CD4-positive, alpha-beta T cell (primary cell): ENCODE measurements at regions of chr16 and their contacts with region 1.

Region 1: DNA sequence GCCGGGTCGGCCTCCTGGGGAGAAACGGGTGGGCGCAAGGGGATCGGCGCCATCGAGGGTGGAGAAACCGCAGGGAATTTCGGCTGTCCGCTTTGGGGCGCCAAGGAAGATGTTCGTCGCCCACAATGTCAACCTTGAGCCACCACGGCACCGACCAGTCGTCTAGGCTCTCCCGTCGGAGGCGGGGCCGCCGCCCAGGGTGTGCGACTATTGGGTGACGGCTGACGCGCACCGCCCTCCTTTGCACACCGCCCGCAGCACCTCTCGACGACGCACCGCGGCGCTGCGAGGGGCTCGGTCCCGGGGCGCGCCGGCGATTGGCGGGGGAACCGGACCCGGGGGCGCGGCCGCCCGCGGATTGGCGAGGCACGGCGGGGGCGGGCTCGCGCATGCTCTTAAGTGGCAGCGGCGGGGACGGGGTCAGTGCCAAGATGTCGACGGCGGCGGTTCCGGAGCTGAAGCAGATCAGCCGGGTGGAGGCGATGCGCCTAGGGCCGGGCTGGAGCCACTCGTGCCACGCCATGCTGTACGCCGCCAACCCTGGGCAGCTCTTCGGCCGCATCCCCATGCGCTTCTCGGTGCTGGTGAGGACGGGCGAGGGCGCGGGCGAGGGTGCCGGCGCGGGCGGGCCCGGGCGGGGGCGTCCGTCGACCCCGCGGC is at the start of gene NUDT16L1:
- DNase-seq: peak in 13 of 14 experiments; percentile 93 to 99 (median 97)
- ATAC-seq: peak; percentile 90
- H3K4me3 ChIP-seq: peak within 1 kb of the TSS; percentile 93
- H3K4me3 Mint-ChIP-seq: peak within 1 kb of the TSS; percentile 91
- H3K27ac ChIP-seq: peak within 1 kb of the TSS; percentile 63 to 81
- H3K27ac Mint-ChIP-seq: peak within 1 kb of the TSS; percentile 89
- H3K4me1 ChIP-seq: peaks cover 25% of the 10 kb centered on the region
- H3K4me1 Mint-ChIP-seq: peaks cover 7% of the 10 kb centered on the region
- H3K27me3 ChIP-seq: no peaks in the 10 kb centered on the region
- H3K27me3 Mint-ChIP-seq: no peaks in the 10 kb centered on the region
- CTCF ChIP-seq: no peak
- total RNA-seq, gene NUDT16L1: 75.2 to 78.9 TPM

Region 2: GRCh38 chr16:4475880-4476788 is 217.3 kb before region 1 on chr16 and contains the start of gene HMOX2:
- CTCF ChIA-PET with region 1: no interaction called
- POLR2A ChIA-PET with region 1: interaction called, 3 read pairs
- intact Hi-C with region 1: loop called in 1 of 2 experiments (anchors 5 kb)
- DNase-seq: peak; percentile 86 to 97 (median 92)
- ATAC-seq: peak; percentile 85
- H3K4me3 ChIP-seq: peak within 1 kb of the TSS; percentile 98
- H3K4me3 Mint-ChIP-seq: peak within 1 kb of the TSS; percentile 92
- H3K27ac ChIP-seq: peak within 1 kb of the TSS; percentile 67 to 80
- H3K27ac Mint-ChIP-seq: peak within 1 kb of the TSS; percentile 78
- H3K4me1 ChIP-seq: peaks cover 68% of the 10 kb centered on the region
- H3K4me1 Mint-ChIP-seq: peaks cover 47% of the 10 kb centered on the region
- H3K27me3 ChIP-seq: no peaks in the 10 kb centered on the region
- H3K27me3 Mint-ChIP-seq: no peaks in the 10 kb centered on the region
- CTCF ChIP-seq: peak; percentile 40
- total RNA-seq, gene HMOX2: 63.4 to 66.4 TPM

Region 3: DNA sequence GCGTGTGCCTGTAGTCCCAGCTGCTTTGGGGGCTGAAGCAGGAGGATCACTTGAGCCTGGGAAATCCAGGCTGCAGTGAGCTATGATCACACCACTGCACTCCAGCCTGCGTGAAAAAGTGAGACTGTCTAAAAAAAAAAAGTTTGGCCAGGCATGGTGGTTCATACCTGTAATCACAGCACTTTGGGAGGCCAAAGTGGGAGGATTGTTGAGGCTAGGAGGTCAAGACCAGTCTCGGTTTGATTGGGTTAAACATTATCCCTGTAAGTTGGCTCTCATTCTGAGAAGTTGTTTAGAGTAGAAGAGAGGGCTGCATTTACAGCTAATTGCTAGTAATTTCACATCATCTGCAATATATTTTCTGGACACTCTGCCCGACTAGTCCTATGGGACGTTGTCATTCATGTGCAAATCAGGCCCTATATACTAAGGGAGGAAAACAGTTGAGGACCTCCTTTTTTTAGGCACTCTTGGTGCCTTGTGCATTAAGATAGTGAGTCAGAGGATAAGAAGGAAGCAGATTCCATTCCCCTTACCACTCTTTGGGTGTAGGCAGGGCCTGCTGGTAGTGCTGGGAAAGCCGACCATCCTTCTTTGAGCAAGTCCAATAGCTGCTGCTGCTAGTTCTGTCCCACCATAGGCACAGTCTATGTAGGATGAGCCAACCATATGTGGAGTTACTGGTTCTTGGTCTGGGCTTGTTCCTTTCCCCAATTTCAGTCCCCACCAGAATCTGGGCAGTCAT is 198.5 kb before region 1 on chr16:
- CTCF ChIA-PET with region 1: no interaction called
- POLR2A ChIA-PET with region 1: no interaction called
- intact Hi-C with region 1: no loop called
- DNase-seq: no peak
- ATAC-seq: no peak
- H3K4me3 ChIP-seq: no peak overlapping the region
- H3K4me3 Mint-ChIP-seq: no peak overlapping the region
- H3K27ac ChIP-seq: no peak overlapping the region
- H3K27ac Mint-ChIP-seq: peak overlapping the region; percentile 87
- H3K4me1 ChIP-seq: peaks cover 82% of the 10 kb centered on the region
- H3K4me1 Mint-ChIP-seq: peaks cover 88% of the 10 kb centered on the region
- H3K27me3 ChIP-seq: no peaks in the 10 kb centered on the region
- H3K27me3 Mint-ChIP-seq: no peaks in the 10 kb centered on the region
- CTCF ChIP-seq: no peak

Region 4: GRCh38 chr16:4517812-4518680 is 175.4 kb before region 1 on chr16:
- CTCF ChIA-PET with region 1: no interaction called
- POLR2A ChIA-PET with region 1: no interaction called
- intact Hi-C with region 1: no loop called
- DNase-seq: peak in 2 of 14 experiments; percentile 29 to 37
- ATAC-seq: peak; percentile 16
- H3K4me3 ChIP-seq: no peak overlapping the region
- H3K4me3 Mint-ChIP-seq: no peak overlapping the region
- H3K27ac ChIP-seq: no peak overlapping the region
- H3K27ac Mint-ChIP-seq: peak overlapping the region; percentile 80
- H3K4me1 ChIP-seq: peaks cover 50% of the 10 kb centered on the region
- H3K4me1 Mint-ChIP-seq: peaks cover 45% of the 10 kb centered on the region
- H3K27me3 ChIP-seq: no peaks in the 10 kb centered on the region
- H3K27me3 Mint-ChIP-seq: no peaks in the 10 kb centered on the region
- CTCF ChIP-seq: peak; percentile 52

Region 5: DNA sequence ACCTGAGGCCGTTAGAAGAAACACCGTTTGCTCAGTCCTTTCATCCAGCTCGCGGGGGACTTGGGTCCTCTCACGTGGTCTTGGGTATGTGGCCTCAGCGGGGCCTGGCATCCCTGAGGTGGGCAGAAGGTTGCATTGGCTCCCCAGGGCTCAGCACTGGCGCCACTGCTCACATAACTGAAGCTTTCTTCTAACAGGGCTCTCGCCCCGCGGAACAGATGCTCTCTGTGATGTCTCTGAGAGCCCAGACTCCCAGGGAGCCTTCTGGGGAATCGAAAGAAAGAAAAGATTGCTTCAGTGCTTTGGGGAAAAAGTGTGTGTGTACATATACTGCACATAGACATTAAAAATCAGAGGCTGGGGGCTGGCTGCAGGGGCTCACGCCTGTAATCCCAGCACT is 58.7 kb before region 1 on chr16:
- CTCF ChIA-PET with region 1: no interaction called
- POLR2A ChIA-PET with region 1: no interaction called
- intact Hi-C with region 1: no loop called
- DNase-seq: no peak
- ATAC-seq: no peak
- H3K4me3 ChIP-seq: no peak overlapping the region
- H3K4me3 Mint-ChIP-seq: no peak overlapping the region
- H3K27ac ChIP-seq: no peak overlapping the region
- H3K27ac Mint-ChIP-seq: no peak overlapping the region
- H3K4me1 ChIP-seq: peaks cover 2% of the 10 kb centered on the region
- H3K4me1 Mint-ChIP-seq: peaks cover 17% of the 10 kb centered on the region
- H3K27me3 ChIP-seq: no peaks in the 10 kb centered on the region
- H3K27me3 Mint-ChIP-seq: no peaks in the 10 kb centered on the region
- CTCF ChIP-seq: no peak

Region 6: DNA sequence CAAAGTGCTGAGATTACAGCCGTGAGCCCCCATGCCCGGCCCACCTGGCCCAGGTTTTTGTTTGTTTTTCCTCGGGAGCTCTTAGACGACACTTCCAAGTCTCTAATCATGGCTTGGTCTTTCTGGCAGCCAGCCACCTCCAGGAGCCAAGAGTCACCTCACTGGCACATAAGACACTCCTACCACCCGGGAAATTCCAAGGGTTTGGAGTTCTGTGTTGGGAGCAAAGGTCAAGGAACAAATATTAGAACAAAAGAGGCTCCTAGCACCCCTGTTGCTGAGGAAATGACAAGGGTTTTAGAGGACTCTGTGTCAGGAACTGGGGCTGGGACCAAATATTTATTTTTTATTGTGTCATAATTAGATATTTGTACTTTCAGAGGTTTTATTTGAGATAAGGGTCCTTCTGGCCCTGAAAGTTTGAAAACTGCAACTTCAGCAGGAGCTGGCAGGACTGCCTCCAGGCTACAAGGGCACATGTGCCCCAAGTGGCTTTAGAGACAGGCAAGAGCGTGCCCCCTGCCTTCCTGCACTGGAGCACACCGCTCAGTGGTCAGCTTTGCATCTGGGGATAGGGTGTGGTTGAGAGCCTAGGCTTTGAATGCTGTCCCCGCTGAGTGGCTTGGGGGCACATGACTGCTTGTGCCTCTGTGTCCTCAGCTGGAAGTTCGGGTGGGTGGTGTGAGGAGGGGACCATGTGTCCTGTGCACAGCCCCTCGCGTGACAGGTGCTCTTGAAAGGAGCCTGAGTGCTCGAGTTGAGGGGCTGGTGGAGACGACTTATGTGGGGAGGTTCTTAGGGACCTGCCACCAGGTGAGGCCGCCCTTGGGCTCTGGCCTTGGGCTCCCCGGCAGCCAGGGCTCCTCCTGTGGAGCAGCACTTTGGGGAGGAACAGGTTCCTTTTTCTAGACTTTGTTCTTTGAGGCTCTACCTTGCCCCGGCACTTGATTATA is 39.1 kb before region 1 on chr16:
- CTCF ChIA-PET with region 1: no interaction called
- POLR2A ChIA-PET with region 1: interaction called, 3 read pairs
- intact Hi-C with region 1: loop called in 1 of 2 experiments (anchors 5 kb)
- DNase-seq: no peak
- ATAC-seq: no peak
- H3K4me3 ChIP-seq: no peak overlapping the region
- H3K4me3 Mint-ChIP-seq: peak overlapping the region; percentile 11
- H3K27ac ChIP-seq: no peak overlapping the region
- H3K27ac Mint-ChIP-seq: no peak overlapping the region
- H3K4me1 ChIP-seq: peaks cover 30% of the 10 kb centered on the region
- H3K4me1 Mint-ChIP-seq: peaks cover 24% of the 10 kb centered on the region
- H3K27me3 ChIP-seq: no peaks in the 10 kb centered on the region
- H3K27me3 Mint-ChIP-seq: no peaks in the 10 kb centered on the region
- CTCF ChIP-seq: no peak

Region 7: GRCh38 chr16:4679850-4680636 is 13.4 kb before region 1 on chr16:
- CTCF ChIA-PET with region 1: no interaction called
- POLR2A ChIA-PET with region 1: interaction called, 10 read pairs
- intact Hi-C with region 1: no loop called
- DNase-seq: peak in 2 of 14 experiments; percentile 59 to 69
- ATAC-seq: no peak
- H3K4me3 ChIP-seq: no peak overlapping the region
- H3K4me3 Mint-ChIP-seq: peak overlapping the region; percentile 30
- H3K27ac ChIP-seq: no peak overlapping the region
- H3K27ac Mint-ChIP-seq: peak overlapping the region; percentile 42
- H3K4me1 ChIP-seq: peaks cover 54% of the 10 kb centered on the region
- H3K4me1 Mint-ChIP-seq: peaks cover 34% of the 10 kb centered on the region
- H3K27me3 ChIP-seq: no peaks in the 10 kb centered on the region
- H3K27me3 Mint-ChIP-seq: no peaks in the 10 kb centered on the region
- CTCF ChIP-seq: no peak

Region 8: GRCh38 chr16:4766874-4767628 is 73.6 kb after region 1 on chr16 and contains the start of gene ZNF500:
- CTCF ChIA-PET with region 1: no interaction called
- POLR2A ChIA-PET with region 1: interaction called, 8 read pairs
- intact Hi-C with region 1: loop called in 1 of 2 experiments (anchors 2 kb)
- DNase-seq: peak; percentile 90 to 99 (median 96)
- ATAC-seq: peak; percentile 90
- H3K4me3 ChIP-seq: peak within 1 kb of the TSS; percentile 80
- H3K4me3 Mint-ChIP-seq: peak within 1 kb of the TSS; percentile 96
- H3K27ac ChIP-seq: peak within 1 kb of the TSS; percentile 52 to 69
- H3K27ac Mint-ChIP-seq: peak within 1 kb of the TSS; percentile 90
- H3K4me1 ChIP-seq: peaks cover 41% of the 10 kb centered on the region
- H3K4me1 Mint-ChIP-seq: peaks cover 32% of the 10 kb centered on the region
- H3K27me3 ChIP-seq: no peaks in the 10 kb centered on the region
- H3K27me3 Mint-ChIP-seq: no peaks in the 10 kb centered on the region
- CTCF ChIP-seq: no peak
- total RNA-seq, gene ZNF500: 11.8 to 12.4 TPM